Heart right ventricle (tissue), 16 donors: ENCODE measurements at regions of chr14 and their contacts with region 1.

Region 1: DNA sequence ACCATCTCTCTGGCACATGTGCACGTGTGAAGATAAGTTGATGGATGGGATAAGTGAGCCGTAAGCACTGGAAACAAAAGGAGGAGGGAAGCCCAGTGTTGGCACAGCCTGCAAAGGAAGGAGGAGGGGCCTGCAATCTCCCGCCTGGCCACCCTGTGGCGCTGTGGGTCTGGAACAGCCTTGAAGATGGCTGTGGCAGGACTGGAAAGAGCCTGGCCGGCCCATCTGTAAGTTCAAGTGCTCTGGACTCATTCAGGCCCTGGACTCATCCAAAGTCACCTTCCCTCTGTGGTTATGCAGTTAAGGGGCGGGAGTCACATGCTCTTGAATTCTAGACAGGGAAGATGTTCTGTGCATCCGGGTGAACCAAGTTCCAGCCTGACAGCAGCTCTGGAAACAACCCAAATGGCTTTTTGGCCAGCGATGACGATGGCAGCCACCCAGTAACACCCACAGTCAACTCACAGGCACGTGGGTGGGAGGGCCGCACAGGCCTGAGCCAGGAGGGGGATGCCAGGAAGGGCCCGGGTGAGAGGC is 50.4 kb downstream of the CHGA start:
- DNase-seq: peak; percentile 79 to 82
- ATAC-seq: peak; percentile 82 to 94 (median 92)
- H3K4me3 ChIP-seq: no peak overlapping the region
- H3K27ac ChIP-seq: peak overlapping the region; percentile 45 to 88 (median 74)
- H3K4me1 ChIP-seq: peaks cover 3 to 51% (median 26%) of the 10 kb centered on the region in 9 donors
- H3K27me3 ChIP-seq: no peaks in the 10 kb centered on the region
- CTCF ChIP-seq: peak; percentile 66 to 83 (median 75)

Region 2: GRCh38 chr14:93137864-93138263 is 164.5 kb after region 1 on chr14:
- intact Hi-C with region 1: loop called in 2 of 10 experiments (anchors 5 kb)
- DNase-seq: peak in 1 of 2 donors; percentile 63
- ATAC-seq: peak; percentile 61 to 79 (median 74)
- H3K4me3 ChIP-seq: no peak overlapping the region
- H3K27ac ChIP-seq: no peak overlapping the region
- H3K4me1 ChIP-seq: peaks cover 0 to 9% (median 0%) of the 10 kb centered on the region in 9 donors
- H3K27me3 ChIP-seq: no peaks in the 10 kb centered on the region
- CTCF ChIP-seq: peak in 4 of 9 donors; percentile 12 to 30 (median 21)

Region 3: DNA sequence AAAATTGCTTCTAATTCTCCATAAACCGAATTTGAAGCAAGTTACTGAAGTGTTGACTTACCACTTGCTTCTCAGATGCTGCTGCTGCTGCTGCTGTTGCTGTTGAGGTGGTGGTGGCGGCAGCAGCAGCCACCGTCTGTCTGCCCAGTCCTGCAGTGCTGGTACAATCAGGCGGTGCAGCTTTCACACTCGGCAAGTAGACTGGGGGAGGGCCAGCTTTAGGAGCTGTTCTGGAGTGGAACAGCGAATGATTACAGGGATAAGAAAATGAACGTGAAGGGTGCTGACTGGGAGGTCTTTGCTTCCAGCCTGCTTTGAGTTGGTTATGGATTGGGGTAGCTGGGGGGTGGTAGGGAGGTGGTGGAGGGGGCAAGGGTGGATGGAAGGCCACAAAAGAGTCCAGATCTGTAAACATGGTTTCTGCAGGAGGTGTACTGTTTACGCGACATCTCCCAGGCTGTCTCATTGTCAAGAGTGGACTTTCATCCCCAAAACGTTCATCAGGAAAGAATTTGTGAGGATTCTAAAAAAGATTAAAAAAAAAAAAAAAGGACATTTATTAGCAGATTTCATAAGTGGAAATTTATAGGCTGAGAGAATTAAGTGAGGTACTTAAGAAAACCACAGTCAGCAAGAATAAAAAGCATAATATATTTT is 272.6 kb after region 1 on chr14:
- intact Hi-C with region 1: no loop called
- DNase-seq: no peak
- ATAC-seq: no peak
- H3K4me3 ChIP-seq: no peak overlapping the region
- H3K27ac ChIP-seq: no peak overlapping the region
- H3K4me1 ChIP-seq: no peaks in the 10 kb centered on the region
- H3K27me3 ChIP-seq: no peaks in the 10 kb centered on the region
- CTCF ChIP-seq: no peak